Activated T-helper 1 cell treated with anti-CD3 and anti-CD28 coated beads, Interleukin-12 subunit alpha, Interleukin-12 subunit beta, Interleukin-2, Interleukin-4 antibody, amounts not matched to agents 30 ng/mL and 10 ng/mL and 1 ng/mL, durations not matched to agents 14 hours and 24 hours and 36 hours (primary cell): ENCODE measurements at regions of chr9 and their contacts with region 1.

Region 1: GRCh38 chr9:5459289-5459829 is 9.0 kb downstream of the CD274 start:
- DNase-seq: no peak
- H3K4me3 Mint-ChIP-seq: peak overlapping the region; percentile 76
- H3K27ac Mint-ChIP-seq: peak overlapping the region; percentile 88
- H3K4me1 Mint-ChIP-seq: peaks cover 70% of the 10 kb centered on the region
- H3K27me3 Mint-ChIP-seq: no peaks in the 10 kb centered on the region

Region 2: GRCh38 chr9:4832786-4833579 is 626.4 kb before region 1 on chr9:
- intact Hi-C with region 1: loop called (anchors 5 kb)
- DNase-seq: peak; percentile 48
- H3K4me3 Mint-ChIP-seq: peak overlapping the region; percentile 53
- H3K27ac Mint-ChIP-seq: peak overlapping the region; percentile 96
- H3K4me1 Mint-ChIP-seq: peaks cover 60% of the 10 kb centered on the region
- H3K27me3 Mint-ChIP-seq: no peaks in the 10 kb centered on the region

Region 3: DNA sequence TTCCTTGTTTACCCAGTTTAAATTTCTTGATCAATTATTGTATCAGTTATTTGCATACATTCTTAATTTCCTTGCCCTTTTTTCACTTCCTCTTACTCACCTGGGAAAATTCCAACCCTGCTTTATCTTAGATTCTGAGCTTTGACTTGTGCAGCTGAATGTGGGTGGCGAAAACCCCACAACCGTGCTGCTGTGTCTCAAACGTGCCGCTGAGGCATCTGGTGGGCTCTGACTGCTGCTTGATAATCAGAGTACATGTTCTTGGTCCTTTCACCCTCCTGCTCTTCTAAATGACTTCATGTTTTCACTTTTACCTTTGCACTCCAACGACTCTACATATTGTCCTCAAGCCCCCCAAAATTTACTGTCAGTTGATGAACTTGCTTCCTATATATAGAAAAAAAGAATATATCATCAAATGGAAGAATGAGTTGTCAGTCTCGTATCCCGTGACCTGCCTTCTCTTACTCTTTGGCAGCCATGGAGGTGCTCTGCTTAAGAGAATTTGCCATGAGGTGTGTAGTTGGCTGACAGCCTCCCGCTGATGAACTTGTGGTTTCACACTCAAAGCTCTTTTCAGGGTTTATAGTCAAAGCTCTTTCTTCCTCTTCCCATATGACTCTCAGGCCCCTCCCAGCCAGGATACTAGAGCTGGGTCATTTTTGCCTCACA is 488.3 kb before region 1 on chr9:
- intact Hi-C with region 1: loop called (anchors 1 kb)
- DNase-seq: peak; percentile 62
- H3K4me3 Mint-ChIP-seq: no peak overlapping the region
- H3K27ac Mint-ChIP-seq: no peak overlapping the region
- H3K4me1 Mint-ChIP-seq: peaks cover 14% of the 10 kb centered on the region
- H3K27me3 Mint-ChIP-seq: no peaks in the 10 kb centered on the region

Region 4: DNA sequence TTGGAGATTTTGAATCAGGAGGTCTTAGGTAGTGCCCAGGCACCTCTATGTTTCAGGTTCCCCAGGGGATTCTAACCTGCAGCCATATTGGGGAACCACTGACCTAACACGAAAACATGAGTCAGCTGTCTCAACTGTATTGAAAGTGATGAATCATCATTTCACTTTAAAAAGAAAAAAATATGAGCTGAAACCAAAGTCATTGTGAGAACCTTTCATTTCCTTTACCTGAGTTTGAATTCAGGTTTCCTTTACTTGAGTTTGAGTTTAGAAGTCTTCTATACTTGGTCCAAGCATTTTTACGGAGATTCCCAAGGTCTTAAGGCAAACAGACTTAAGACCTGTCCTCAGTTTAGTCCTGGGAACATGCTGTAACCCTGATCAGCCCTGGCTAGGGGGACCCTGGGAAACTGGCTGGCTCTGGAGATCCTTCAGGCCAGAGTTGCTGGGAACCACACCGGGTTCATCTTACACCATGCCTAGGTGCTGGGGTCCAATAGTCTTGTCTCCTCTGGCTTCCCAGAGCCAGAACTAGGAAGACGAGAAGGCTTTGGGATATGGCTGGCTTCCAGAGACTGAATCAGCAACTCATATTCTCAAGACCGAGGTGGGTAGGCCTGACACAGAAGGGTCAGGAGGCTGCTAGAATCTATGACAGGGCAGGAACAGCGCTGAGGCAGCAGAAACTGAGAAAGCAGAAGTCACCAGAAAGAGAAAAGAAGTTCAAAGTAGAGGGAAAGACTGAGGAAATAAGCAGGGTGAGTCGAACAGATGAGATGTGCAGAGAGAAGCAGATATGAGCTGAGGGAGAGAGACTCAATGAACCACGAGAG is 34.5 kb after region 1 on chr9:
- intact Hi-C with region 1: loop called (anchors 1 kb)
- DNase-seq: peak; percentile 20
- H3K4me3 Mint-ChIP-seq: peak overlapping the region; percentile 45
- H3K27ac Mint-ChIP-seq: peak overlapping the region; percentile 86
- H3K4me1 Mint-ChIP-seq: peaks cover 17% of the 10 kb centered on the region
- H3K27me3 Mint-ChIP-seq: no peaks in the 10 kb centered on the region

Region 5: DNA sequence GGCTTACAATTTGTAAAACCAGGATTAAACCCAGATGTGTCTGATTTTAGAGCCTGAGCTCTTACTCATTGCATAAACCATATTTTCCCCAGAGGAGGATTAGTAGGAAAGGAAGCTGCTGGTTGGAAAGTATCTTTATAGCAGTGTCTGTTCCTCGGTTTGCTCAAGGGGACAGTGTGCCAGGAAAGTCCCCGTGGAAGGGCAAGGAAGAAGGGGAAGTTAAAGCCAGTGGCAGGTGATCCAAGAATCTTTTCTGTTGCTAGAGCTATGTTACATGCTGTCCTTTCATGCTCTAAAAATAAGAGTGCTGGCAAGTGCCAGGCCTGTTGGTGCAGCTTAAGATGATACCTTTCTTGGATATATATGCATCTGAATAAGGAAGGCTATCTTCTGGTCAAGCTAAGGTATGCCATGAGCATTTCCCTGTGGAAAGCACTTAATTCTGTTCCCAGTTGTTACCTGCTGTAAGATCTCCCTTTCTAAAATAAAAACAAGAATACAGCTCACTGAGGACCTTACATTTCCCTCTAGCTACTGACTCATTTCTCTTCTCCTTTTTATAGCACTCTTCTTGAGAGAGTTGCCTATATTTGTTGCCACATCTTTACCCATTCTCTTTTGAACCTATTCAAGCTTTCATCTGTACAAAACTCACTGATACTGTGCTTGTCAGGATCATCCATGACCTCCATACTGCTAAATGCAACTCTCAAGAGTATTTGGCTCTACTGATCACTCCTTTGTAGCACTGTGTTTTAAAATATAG is 59.0 kb after region 1 on chr9:
- intact Hi-C with region 1: loop called (anchors 2 kb)
- DNase-seq: no peak
- H3K4me3 Mint-ChIP-seq: no peak overlapping the region
- H3K27ac Mint-ChIP-seq: peak overlapping the region; percentile 53
- H3K4me1 Mint-ChIP-seq: peaks cover 47% of the 10 kb centered on the region
- H3K27me3 Mint-ChIP-seq: peaks cover 1% of the 10 kb centered on the region

Region 6: DNA sequence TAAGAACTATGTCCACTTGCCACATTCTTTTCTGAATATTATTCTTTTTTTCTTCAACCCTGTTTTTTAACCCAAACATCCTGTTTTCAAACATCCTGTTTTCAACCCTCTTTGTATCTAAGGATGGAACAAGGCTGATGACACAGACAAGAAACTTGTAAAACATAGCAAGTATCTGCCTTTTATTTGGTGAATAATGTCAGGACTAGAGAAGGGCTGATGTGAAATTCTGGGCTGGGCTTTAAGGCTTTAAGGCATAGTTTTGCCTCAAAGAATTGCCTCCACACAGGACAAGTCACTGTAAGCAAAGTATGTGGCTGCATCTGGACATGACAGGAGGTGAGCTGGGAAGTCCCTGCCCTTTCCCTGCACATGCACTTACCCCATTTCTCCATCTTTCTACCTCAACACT is 127.0 kb after region 1 on chr9:
- intact Hi-C with region 1: loop called (anchors 1 kb)
- DNase-seq: peak; percentile 26
- H3K4me3 Mint-ChIP-seq: peak overlapping the region; percentile 35
- H3K27ac Mint-ChIP-seq: peak overlapping the region; percentile 95
- H3K4me1 Mint-ChIP-seq: peaks cover 64% of the 10 kb centered on the region
- H3K27me3 Mint-ChIP-seq: no peaks in the 10 kb centered on the region

Region 7: GRCh38 chr9:6230037-6230760 is 770.8 kb after region 1 on chr9:
- intact Hi-C with region 1: no loop called
- DNase-seq: no peak
- H3K4me3 Mint-ChIP-seq: no peak overlapping the region
- H3K27ac Mint-ChIP-seq: no peak overlapping the region
- H3K4me1 Mint-ChIP-seq: no peaks in the 10 kb centered on the region
- H3K27me3 Mint-ChIP-seq: peaks cover 8% of the 10 kb centered on the region